ENCODE measurements at regions of chr3 and their contacts with region 1.

Region 1: GRCh38 chr3:140470962-140471361 is 206.9 kb upstream of the TRIM42 start:
- DNase-seq: no peak
- H3K4me3 ChIP-seq: no peak overlapping the region
- H3K27ac ChIP-seq: no peak overlapping the region
- H3K4me1 ChIP-seq: no peaks in the 10 kb centered on the region
- H3K27me3 ChIP-seq: no peaks in the 10 kb centered on the region
- CTCF ChIP-seq: no peak
- POLR2A ChIP-seq: no peak

Region 2: DNA sequence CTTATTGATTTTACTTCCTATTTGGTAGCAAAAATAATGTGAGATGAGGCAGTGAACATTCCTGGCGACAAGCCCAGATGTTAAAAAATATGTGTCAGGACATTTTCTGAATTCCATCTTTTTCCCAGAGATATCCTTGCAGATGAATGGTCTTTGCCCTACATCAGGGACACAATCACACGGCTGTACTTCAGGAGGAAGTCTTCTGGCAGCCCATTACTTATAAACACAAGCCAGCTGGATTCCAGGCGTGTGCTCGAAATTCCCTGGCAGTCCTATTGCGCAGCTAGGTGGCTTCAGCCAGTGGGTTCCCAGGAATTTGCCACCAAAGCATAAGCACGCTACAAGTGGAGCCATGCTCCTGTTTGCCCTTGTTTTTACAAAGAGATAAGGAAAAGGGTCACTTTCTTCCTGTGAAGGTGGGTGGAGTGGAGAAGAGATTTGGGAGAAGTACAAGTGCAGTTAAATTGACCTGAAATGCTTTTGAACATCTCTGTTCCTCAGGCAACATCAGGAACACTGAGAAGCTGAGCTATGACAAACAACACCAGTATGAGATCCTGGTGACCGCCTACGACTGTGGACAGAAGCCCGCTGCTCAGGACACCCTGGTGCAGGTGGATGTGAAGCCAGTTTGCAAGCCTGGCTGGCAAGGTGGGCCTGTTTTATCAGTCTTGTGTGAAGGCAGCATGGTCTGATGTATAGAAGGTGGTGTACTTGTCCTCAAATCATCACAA is 50.2 kb before region 1 on chr3:
- intact Hi-C with region 1: no loop called
- DNase-seq: no peak
- H3K4me3 ChIP-seq: no peak overlapping the region
- H3K27ac ChIP-seq: no peak overlapping the region
- H3K4me1 ChIP-seq: no peaks in the 10 kb centered on the region
- H3K27me3 ChIP-seq: no peaks in the 10 kb centered on the region
- CTCF ChIP-seq: no peak
- POLR2A ChIP-seq: no peak

Region 3: DNA sequence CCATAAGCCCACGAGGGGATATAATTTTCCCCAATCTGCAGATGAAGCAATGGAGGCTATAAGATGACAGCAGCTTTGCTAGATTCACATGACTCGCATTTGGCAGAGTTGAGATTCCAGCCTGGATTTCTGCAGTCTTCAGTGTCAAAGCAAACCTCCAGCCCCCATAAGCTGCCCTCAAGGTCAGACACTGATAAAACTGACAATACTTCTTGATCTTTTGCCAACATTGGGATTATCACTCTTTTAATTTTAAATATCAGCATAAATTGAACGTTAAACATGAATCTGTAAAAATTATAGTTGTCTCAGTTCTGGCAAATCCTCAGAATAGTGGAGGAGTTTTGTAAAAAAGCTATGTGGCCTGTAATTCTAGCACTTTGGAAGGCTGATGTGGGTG is 27.2 kb before region 1 on chr3:
- intact Hi-C with region 1: loop called (anchors 2 kb)
- DNase-seq: no peak
- H3K4me3 ChIP-seq: no peak overlapping the region
- H3K27ac ChIP-seq: no peak overlapping the region
- H3K4me1 ChIP-seq: no peaks in the 10 kb centered on the region
- H3K27me3 ChIP-seq: no peaks in the 10 kb centered on the region
- CTCF ChIP-seq: no peak
- POLR2A ChIP-seq: no peak